Left cardiac atrium (tissue), 4 donors: ENCODE measurements at regions of chr19 and their contacts with region 1.

Region 1: DNA sequence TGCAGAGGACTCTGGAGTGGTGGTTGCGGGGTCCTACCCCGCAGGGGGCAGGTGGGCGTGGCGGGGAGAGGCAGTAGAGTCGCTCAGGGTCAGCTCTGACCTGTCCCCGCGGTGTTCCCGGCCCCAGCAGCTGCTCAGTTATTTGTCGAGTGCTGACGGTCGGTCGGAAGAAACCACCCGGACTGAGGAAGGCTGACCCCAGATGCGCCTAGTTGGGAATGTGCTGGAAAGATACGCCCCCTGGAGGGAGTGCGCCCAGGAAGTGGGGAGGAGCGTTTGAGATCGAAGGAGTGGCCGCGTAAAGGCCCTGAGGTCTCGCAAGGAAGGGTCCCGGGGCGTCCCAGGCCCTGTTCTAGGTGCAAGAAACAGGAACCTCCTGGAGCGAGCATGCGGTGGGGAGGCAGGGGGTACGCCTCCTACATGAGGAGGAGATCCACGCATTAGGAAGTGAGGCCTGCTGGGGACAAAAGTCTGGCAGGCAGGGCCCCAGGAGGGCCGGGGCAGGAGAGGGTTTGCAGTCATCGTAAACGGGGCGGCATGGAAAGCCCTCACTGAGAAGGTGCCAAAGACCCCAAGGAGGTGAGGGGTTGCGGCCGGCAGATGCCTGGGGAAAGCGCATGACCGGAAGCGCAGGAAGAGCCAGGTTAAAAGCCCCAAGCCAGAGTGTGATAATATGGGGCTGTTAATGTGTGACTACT is 9.2 kb downstream of the CCDC8 start:
- DNase-seq: no peak
- ATAC-seq: peak; percentile 56 to 59

Region 2: DNA sequence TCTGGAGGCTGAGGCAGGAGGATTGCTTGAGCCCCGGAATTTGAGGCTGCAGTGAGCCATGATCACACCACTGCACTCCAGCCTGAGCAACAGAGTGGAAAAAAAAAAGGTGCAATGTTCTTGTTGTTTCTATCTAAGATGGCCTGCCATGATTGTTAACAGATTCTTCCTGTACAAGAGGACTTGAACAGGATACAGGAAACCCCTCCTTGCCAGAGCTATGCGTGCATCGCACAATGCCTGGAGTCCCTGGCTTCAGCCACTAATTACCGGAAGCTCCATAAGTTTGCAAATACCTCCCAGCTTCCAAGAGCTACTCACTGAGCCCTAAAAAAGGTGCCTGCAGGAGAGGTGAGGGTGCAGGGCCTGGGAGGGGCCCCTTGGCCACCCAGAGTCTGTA is 120.4 kb before region 1 on chr19:
- intact Hi-C with region 1: loop called in 1 of 2 experiments (anchors 5 kb)
- DNase-seq: peak; percentile 62
- ATAC-seq: peak; percentile 32 to 68

Region 3: GRCh38 chr19:46442808-46443450 is 38.7 kb after region 1 on chr19:
- intact Hi-C with region 1: no loop called
- DNase-seq: peak; percentile 32
- ATAC-seq: peak; percentile 39 to 79

Region 4: DNA sequence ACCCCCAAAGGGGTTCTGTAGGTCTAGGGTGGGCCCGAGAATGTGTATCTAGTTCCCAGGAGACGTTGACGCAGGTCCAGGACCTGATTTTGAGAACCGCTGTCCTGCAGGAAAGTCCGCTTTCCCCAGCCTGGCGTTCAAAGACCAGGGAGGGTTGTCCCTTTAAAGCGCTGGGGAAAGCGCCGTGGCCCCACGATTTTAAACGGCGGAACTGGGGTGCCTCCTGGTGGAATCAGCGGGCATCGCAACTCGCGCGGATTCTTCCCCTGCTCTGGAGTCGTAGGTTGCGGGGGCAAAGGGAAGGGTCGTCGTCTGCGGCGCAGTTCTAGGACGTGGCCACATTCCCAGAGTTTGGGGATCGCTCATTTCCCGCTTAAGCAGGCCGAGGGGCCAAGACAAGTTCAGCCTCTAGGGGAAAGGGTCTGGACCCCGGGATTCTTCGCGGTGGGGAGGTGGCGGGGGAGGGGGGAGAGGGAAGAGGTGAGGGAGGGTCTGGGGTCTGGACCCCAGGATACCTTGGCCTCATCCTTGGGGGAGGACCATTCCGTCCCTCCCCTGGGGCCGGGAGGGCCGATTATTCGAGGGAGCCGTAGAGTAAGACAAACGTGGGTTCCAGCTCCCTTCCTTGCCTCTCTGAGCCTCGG is 83.7 kb after region 1 on chr19:
- intact Hi-C with region 1: loop called (anchors 2 to 5 kb)
- DNase-seq: peak; percentile 77
- ATAC-seq: peak; percentile 71 to 83